ENCODE measurements at regions of chr6 and their contacts with region 1.

Region 1: DNA sequence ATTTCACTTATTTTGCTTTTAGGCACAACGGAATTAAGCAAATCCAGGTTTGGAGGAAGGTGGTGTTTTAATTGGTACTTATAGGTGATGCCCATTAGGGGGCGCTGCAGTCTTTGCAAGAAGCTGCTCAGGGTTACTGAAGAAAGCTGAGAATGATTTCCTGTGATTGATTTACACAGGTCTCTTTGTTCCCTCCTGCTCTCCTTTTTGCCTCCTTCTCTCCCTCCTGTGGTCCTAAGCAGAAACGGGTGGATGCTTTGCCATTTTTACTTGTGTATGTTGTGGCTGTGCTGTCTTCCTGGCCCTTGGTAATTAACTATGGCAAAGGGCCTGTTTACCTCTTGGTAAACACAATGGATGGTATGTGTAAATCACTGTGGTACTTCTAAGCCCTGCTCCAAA is 97.8 kb downstream of the ANKS1A start:
- DNase-seq: peak; percentile 43 to 76
- ATAC-seq: peak; percentile 61 to 91 (median 82)
- H3K4me3 ChIP-seq: no peak overlapping the region
- H3K27ac ChIP-seq: peak overlapping the region in 3 of 10 donors; percentile 11 to 60 (median 18)
- H3K4me1 ChIP-seq: peaks cover 0 to 21% (median 8%) of the 10 kb centered on the region in 9 donors
- H3K27me3 ChIP-seq: no peaks in the 10 kb centered on the region
- CTCF ChIP-seq: peak; percentile 78 to 95 (median 86)

Region 2: GRCh38 chr6:35016502-35017321 is 29.9 kb after region 1 on chr6:
- intact Hi-C with region 1: loop called in 1 of 10 experiments (anchors 1 kb)
- DNase-seq: peak; percentile 37 to 66
- ATAC-seq: peak; percentile 67 to 84 (median 81)
- H3K4me3 ChIP-seq: peak overlapping the region; percentile 37 to 73 (median 59)
- H3K27ac ChIP-seq: peak overlapping the region; percentile 89 to 99 (median 95)
- H3K4me1 ChIP-seq: peaks cover 15 to 89% (median 76%) of the 10 kb centered on the region in 9 donors
- H3K27me3 ChIP-seq: no peaks in the 10 kb centered on the region
- CTCF ChIP-seq: no peak

Region 3: DNA sequence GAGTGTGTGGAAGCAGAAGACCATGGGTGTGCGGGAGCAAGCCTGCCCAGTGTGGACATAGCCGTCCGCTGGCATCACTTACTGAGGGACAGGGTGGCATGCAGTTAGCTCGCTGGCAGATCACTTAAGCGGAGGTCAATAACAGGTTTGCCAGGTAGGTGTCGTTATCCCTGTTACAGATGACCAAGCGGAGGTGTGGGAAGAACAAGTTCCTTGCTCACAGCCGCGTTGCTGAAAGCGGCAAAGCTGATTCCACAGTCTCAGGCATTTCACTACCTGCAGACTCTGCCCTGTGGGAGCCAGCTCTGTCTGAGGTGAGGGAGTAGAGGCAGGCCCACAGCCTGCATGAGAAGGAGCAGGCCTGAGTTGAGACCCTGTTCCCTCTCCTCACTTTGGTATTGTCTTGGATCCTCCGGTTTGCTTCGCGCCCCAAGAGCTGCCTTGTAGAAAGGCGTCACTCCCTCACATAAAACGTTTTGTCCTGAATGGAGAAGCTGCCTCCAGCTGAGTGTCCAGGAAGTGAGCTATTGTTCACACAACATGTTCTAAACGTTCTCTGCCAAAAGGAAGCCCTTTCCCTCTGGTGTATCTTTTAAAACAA is 57.4 kb after region 1 on chr6:
- intact Hi-C with region 1: no loop called
- DNase-seq: no peak
- ATAC-seq: peak; percentile 36 to 77 (median 64)
- H3K4me3 ChIP-seq: no peak overlapping the region
- H3K27ac ChIP-seq: peak overlapping the region; percentile 32 to 93 (median 82)
- H3K4me1 ChIP-seq: peaks cover 32 to 100% (median 94%) of the 10 kb centered on the region in 9 donors
- H3K27me3 ChIP-seq: no peaks in the 10 kb centered on the region
- CTCF ChIP-seq: no peak

Region 4: DNA sequence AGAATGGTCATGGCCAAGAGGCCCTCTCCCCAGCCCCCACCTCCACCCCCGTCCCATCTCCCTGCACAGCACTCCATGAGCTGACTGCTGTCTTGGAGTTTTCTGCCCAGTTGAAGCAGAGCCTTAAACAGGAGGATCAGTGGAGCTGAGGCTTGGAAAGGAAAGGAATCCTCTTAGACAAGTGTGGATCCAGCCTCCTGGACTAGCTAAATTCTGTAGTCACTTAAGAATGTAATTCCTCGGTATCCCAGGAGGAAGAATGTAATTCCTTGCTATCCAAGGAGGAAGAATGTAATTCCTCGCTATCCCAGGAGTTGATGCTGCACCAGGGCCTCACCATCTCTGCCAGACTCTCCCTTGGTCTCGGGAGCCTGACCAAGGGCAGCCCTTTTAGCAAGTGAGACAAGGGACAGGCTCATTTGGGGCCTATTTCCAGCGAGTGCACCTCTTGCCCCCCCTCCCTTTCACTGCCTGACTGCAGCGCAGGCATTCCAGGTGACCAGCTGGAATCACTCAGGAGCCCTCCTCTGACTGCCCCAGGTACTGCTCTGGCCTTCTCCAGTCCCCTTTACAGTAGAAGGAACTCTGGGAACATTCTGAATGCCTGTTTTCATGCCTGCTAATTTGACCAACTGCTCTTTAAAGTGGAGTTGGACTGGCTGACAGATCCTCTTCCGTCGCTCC is 78.1 kb after region 1 on chr6:
- intact Hi-C with region 1: loop called in 2 of 10 experiments (anchors 10 kb)
- DNase-seq: no peak
- ATAC-seq: peak in 5 of 8 donors; percentile 3 to 44 (median 35)
- H3K4me3 ChIP-seq: no peak overlapping the region
- H3K27ac ChIP-seq: peak overlapping the region; percentile 6 to 80 (median 66)
- H3K4me1 ChIP-seq: peaks cover 18 to 56% (median 39%) of the 10 kb centered on the region in 9 donors
- H3K27me3 ChIP-seq: no peaks in the 10 kb centered on the region
- CTCF ChIP-seq: peak in 3 of 9 donors; percentile 11 to 22 (median 18)

Region 5: DNA sequence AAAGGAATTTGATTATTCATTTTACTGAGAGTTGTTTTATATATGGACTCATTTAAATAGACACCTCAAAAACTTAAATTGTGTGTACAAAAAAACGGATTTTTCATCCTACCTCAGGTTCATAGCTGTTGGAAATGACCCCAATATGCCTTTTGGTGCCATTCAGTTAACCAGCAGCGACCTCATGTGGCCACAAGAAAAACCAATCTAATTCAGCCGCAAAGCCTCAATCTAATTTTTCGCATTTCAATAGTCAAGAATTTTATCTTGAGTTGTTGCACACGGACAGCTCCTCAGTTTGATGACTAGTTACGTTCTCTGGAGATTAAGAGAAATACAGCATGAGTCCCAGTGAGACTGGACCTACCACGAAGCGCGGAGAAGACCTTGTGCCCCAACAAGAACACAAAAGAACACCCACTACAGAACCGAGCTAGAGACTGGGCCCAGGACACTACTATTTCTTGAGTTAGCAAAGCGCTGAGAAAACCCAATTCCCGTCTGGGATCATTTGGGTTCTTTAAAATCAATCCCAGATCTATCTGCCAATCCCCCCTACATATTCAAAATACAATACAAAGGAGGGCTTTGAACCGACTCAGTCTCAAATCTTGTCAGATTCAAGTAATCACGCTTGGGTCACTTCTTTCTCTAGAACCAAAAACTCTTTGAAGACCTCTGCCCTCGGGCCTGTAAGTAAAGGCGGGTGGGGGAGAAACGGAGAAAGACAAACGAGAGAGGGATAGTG is 153.2 kb after region 1 on chr6:
- intact Hi-C with region 1: loop called (anchors 1 to 2 kb)
- DNase-seq: peak in 1 of 2 donors; percentile 55
- ATAC-seq: peak in 6 of 8 donors; percentile 38 to 76 (median 63)
- H3K4me3 ChIP-seq: no peak overlapping the region
- H3K27ac ChIP-seq: no peak overlapping the region
- H3K4me1 ChIP-seq: peaks cover 0 to 26% (median 10%) of the 10 kb centered on the region in 9 donors
- H3K27me3 ChIP-seq: peaks cover 0 to 15% (median 0%) of the 10 kb centered on the region in 7 donors
- CTCF ChIP-seq: peak; percentile 63 to 92 (median 85)

Region 6: DNA sequence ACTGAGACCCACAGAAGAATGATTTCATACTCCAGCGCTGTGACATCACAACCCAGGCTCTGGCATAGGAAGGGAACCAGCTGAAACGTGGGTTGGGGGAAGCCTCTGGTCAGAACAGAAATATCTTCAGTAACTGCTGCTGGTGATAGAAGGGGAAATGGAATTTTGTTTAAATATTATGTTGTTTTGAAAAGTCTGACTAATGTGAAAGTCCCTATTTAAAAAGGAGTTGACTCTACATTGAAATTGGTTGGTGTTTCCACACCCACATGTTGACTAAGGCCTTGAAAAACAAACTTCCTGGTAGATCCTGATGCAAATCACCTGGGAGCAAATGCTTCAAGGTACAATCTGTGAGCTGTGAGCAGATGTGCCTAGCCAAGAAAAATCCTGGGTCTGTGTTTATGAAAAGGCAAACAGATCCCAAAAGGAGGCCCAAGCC is 178.8 kb after region 1 on chr6:
- intact Hi-C with region 1: no loop called
- DNase-seq: no peak
- ATAC-seq: no peak
- H3K4me3 ChIP-seq: no peak overlapping the region
- H3K27ac ChIP-seq: no peak overlapping the region
- H3K4me1 ChIP-seq: peaks cover 0 to 24% (median 11%) of the 10 kb centered on the region in 9 donors
- H3K27me3 ChIP-seq: peaks cover 0 to 3% (median 0%) of the 10 kb centered on the region in 7 donors
- CTCF ChIP-seq: no peak

Region 7: GRCh38 chr6:35240840-35241801 is 254.3 kb after region 1 on chr6:
- intact Hi-C with region 1: loop called in 8 of 10 experiments (anchors 2 to 10 kb)
- DNase-seq: peak; percentile 68 to 77
- ATAC-seq: peak in 7 of 8 donors; percentile 19 to 48 (median 35)
- H3K4me3 ChIP-seq: no peak overlapping the region
- H3K27ac ChIP-seq: peak overlapping the region in 2 of 10 donors; percentile 7 to 31
- H3K4me1 ChIP-seq: peaks cover 9 to 51% (median 25%) of the 10 kb centered on the region in 9 donors
- H3K27me3 ChIP-seq: no peaks in the 10 kb centered on the region
- CTCF ChIP-seq: peak; percentile 83 to 98 (median 95)